HepG2 (cell line): ENCODE measurements at regions of chr21 and their contacts with region 1.

Region 1: DNA sequence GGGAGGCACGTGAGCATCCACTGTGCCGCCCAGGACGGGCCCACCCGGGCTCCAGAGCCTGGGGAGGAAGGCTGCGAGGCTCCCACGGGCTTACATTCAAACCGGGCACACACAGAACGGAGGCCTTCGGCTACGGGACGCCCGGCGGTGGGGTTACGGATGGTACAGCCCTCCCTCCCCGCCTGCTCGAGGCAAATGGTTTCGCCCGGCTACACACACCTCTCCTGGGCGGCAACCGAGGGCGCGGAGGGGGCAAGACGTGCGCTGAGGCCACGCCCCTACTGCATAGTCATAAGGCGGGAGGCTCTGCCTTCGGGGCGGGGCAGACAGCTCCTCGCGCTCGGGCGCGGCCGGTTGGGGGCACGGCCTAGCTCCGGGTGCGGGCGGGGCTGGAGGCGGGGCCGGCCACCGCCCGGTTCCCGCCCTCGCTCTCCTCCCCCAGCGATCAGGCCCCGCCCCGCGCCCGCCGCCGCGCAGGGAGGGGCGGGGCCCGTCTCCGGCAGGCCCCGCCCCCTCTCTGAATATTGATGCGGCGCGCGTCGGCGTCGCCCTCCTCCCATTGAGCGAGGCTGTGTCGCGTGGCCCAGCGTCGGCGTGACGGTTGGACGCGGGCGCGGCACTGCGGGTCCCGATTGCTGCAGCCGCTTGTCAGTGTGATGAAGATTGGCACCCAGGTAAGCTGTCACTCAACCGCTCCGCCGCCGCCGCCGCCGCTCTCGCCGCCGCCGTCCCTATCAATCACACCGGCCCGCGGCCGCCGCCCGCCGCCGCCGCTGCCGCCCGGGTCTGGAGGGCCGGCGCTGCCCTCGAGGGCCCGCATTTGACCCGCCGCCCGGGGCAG is at the start of gene PKNOX1:
- DNase-seq: peak; percentile 94
- ATAC-seq: peak; percentile 88
- H3K4me3 ChIP-seq: peak within 1 kb of the TSS; percentile 68 to 86 (median 84)
- H3K27ac ChIP-seq: peak within 1 kb of the TSS; percentile 87
- H3K4me1 ChIP-seq: peaks cover 60% of the 10 kb centered on the region
- H3K27me3 ChIP-seq: no peaks in the 10 kb centered on the region; a peak in 1 of 5 replicates
- CTCF ChIP-seq: peak; percentile 16; the same call in 1 of the 2 replicates
- EP300 ChIP-seq: no peak
- POLR2A ChIP-seq: peak in 1 of 2 experiments; percentile 64; a peak in 3 of 4 replicates
- RAD21 ChIP-seq: 0 out of 2 replicates have a peak, but pooled peaks have one; percentile 16
- total RNA-seq, gene PKNOX1: 7.9 and 9.6 TPM in 2 replicates

Region 2: DNA sequence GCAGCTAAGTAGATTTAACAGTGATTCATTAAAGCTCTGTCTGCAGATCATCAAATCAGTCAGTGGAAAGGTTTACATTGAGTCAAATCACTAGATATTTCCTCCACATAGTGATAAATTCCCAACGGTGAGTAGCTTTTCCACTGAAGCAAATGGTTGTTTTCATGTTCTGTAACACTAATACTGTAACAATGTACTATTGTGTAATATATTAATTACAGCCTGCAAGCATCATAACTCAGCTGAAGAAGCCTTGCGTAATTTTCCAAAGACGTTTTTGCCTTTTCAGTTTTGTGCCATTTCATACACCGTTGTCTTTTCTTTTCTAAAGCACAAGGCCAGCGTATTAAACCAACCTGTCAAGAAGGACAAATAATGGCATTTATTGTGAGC is 337.7 kb before region 1 on chr21:
- CTCF ChIA-PET with region 1: no interaction called
- POLR2A ChIA-PET with region 1: no interaction called
- in situ Hi-C with region 1: no loop called
- intact Hi-C with region 1: no loop called
- DNase-seq: no peak
- ATAC-seq: no peak
- H3K4me3 ChIP-seq: no peak overlapping the region
- H3K27ac ChIP-seq: no peak overlapping the region
- H3K4me1 ChIP-seq: peaks cover 29% of the 10 kb centered on the region
- H3K27me3 ChIP-seq: peaks cover 2 to 30% of the 10 kb centered on the region in 2 experiments; a peak in 4 of 5 replicates
- CTCF ChIP-seq: no peak
- EP300 ChIP-seq: no peak
- POLR2A ChIP-seq: no peak
- RAD21 ChIP-seq: no peak

Region 3: GRCh38 chr21:42892931-42893755 is 81.1 kb before region 1 on chr21 and contains the start of gene NDUFV3:
- CTCF ChIA-PET with region 1: no interaction called
- POLR2A ChIA-PET with region 1: interaction called, 10 read pairs
- in situ Hi-C with region 1: no loop called
- intact Hi-C with region 1: no loop called
- DNase-seq: peak; percentile 96
- ATAC-seq: peak; percentile 96
- H3K4me3 ChIP-seq: peak within 1 kb of the TSS; percentile 89 to 99 (median 94)
- H3K27ac ChIP-seq: peak within 1 kb of the TSS; percentile 88
- H3K4me1 ChIP-seq: peaks cover 18% of the 10 kb centered on the region
- H3K27me3 ChIP-seq: no peaks in the 10 kb centered on the region; a peak in 1 of 5 replicates
- CTCF ChIP-seq: peak; percentile 21; the same call in 1 of the 2 replicates
- EP300 ChIP-seq: no peak
- POLR2A ChIP-seq: peak; percentile 90 to 93
- RAD21 ChIP-seq: peak; percentile 50
- total RNA-seq, gene NDUFV3: 29.6 and 35.7 TPM in 2 replicates

Region 4: DNA sequence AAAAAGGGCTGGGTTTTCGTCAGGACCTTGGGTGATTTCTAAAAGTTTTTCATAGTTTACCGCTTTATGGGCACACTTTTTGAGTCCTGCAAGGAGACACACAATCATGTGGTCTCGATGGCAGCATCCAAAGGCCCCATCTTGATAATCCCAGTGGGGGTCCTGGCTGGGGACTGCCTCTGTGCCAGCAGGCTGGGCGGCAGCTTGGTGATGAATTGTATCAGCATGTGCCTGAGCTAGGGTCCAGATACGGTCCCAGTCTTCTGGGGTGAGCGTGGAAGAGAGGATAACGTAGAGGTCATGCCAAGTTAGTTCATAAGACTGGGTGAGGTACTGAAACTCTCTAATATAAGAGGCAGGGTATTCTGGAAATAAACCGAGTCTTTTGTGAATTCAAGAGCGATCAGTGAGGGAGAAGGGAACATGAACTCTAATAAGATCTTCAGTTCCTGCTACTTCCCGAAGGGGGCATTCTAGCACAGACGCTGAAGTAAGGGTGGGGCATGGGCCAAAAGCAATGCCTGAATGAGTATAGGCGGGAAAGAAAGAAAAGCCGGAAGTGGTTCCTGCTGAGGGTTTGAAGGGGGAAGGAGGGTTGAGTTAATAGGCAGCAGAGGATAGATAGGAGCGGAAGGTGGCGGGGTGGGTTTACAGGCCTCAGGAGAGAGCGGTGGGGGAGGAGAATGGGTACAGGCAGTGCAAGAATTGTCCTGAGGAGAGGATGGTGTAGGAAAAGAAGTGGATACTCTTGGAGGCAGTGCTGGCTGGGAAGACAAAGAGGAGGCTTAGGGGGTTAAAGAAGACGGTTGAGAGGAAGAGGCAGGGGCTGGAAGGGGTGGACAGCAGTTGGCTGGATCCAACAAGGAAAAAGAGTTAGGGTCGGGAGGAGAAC is 50.4 kb before region 1 on chr21:
- CTCF ChIA-PET with region 1: no interaction called
- POLR2A ChIA-PET with region 1: interaction called, 3 read pairs
- in situ Hi-C with region 1: no loop called
- intact Hi-C with region 1: loop called (anchors 5 kb)
- DNase-seq: peak; percentile 83
- ATAC-seq: peak; percentile 81
- H3K4me3 ChIP-seq: no peak overlapping the region
- H3K27ac ChIP-seq: no peak overlapping the region
- H3K4me1 ChIP-seq: peaks cover 14% of the 10 kb centered on the region
- H3K27me3 ChIP-seq: peaks cover 0 to 1% of the 10 kb centered on the region in 2 experiments; a peak in 2 of 5 replicates
- CTCF ChIP-seq: peak; percentile 84
- EP300 ChIP-seq: no peak
- POLR2A ChIP-seq: no peak
- RAD21 ChIP-seq: peak; percentile 82

Region 5: GRCh38 chr21:42956819-42957632 is 17.2 kb before region 1 on chr21:
- CTCF ChIA-PET with region 1: no interaction called
- POLR2A ChIA-PET with region 1: interaction called, 10 read pairs
- in situ Hi-C with region 1: no loop called
- intact Hi-C with region 1: no loop called
- DNase-seq: peak; percentile 35
- ATAC-seq: peak; percentile 84
- H3K4me3 ChIP-seq: no peak overlapping the region
- H3K27ac ChIP-seq: no peak overlapping the region
- H3K4me1 ChIP-seq: peaks cover 28% of the 10 kb centered on the region
- H3K27me3 ChIP-seq: peaks cover 0 to 2% of the 10 kb centered on the region in 2 experiments; a peak in 2 of 5 replicates
- CTCF ChIP-seq: no peak
- EP300 ChIP-seq: no peak
- POLR2A ChIP-seq: no peak
- RAD21 ChIP-seq: no peak

Region 6: DNA sequence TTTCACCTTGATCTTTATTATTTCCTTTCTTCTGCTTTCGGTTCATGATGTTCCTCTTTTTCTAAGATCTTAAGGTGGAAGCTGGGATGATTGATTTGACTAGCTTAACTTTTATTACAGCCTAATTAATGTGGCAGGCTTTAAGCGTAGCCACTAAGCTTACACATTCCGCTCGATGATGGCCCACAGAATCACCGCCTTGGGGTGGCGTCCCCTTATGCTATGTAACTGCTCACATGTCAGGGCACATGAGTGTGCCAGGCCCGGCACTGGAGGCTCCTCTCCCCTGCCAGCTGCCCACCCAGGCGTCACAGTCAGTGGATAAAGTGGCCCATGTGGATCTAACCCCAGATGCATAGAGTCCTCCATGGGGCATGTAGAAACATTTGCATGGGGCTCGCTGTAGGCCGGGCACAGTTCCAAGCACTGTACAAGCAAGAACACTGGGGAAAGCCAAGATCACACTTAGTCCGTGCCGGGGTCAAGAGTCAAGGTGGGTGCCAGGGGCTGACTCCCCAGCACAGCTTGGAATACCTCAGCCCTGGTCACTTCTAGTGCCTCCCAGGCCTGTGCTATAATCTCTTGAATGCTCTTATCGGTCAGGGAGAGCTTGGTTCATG is 41.8 kb after region 1 on chr21:
- CTCF ChIA-PET with region 1: no interaction called
- POLR2A ChIA-PET with region 1: no interaction called
- in situ Hi-C with region 1: no loop called
- intact Hi-C with region 1: no loop called
- DNase-seq: no peak
- ATAC-seq: no peak
- H3K4me3 ChIP-seq: no peak overlapping the region
- H3K27ac ChIP-seq: no peak overlapping the region
- H3K4me1 ChIP-seq: no peaks in the 10 kb centered on the region
- H3K27me3 ChIP-seq: no peaks in the 10 kb centered on the region
- CTCF ChIP-seq: no peak
- EP300 ChIP-seq: no peak
- POLR2A ChIP-seq: no peak
- RAD21 ChIP-seq: no peak